Activated T-helper 2 cell treated with anti-CD3 and anti-CD28 coated beads, Interferon-gamma antibody, Interleukin-2, Interleukin-4, amounts not matched to agents 10 μg/mL and 5 μg/mL and 100 μg/mL, durations not matched to agents 14 hours and 24 hours and 36 hours (primary cell): ENCODE measurements at regions of chr5 and their contacts with region 1.

Region 1: DNA sequence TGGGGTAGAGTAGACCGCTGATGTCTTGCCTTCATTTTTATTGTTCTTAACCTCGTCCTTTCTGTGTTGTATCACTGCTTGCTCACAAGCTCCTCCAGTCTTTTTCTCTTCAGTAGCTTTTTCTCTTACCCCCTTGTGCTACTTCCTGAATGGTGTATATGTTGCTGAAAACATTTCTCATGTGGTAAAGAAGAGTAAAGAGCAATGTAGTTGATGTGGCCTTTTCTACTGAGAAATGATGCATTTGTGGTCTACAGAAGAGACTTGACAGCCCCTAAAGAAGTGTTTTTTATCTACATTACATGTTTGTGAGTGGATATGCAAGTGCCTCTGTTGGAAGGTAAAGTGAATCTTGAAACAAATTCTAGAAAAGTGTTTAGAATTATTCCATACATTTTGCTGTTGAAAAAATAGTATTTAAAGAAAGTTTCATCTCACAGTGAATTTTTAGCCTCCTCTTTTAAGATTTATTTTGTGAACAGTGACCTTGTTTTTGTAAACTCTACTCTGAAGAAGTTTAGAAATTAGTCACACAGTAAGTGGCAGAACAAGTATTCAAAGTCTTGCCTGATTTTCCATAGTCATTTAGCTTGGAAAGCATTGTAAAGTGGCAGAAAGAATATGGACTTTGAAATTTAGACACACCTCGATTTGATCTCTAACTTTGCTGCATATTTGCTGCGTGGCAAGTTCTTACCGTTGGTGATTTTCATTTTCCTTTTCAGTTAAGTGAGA is 17.4 kb downstream of the CDC42SE2 start:
- DNase-seq: no peak
- H3K4me3 Mint-ChIP-seq: peak overlapping the region; percentile 82
- H3K27ac Mint-ChIP-seq: peak overlapping the region; percentile 96
- H3K4me1 Mint-ChIP-seq: peaks cover 78% of the 10 kb centered on the region
- H3K27me3 Mint-ChIP-seq: no peaks in the 10 kb centered on the region

Region 2: GRCh38 chr5:131186561-131187256 is 94.6 kb before region 1 on chr5:
- intact Hi-C with region 1: no loop called
- DNase-seq: no peak
- H3K4me3 Mint-ChIP-seq: no peak overlapping the region
- H3K27ac Mint-ChIP-seq: no peak overlapping the region
- H3K4me1 Mint-ChIP-seq: peaks cover 13% of the 10 kb centered on the region
- H3K27me3 Mint-ChIP-seq: no peaks in the 10 kb centered on the region

Region 3: GRCh38 chr5:131263648-131264450 is 17.5 kb before region 1 on chr5 and contains the start of gene CDC42SE2:
- intact Hi-C with region 1: loop called (anchors 1 kb)
- DNase-seq: peak; percentile 85
- H3K4me3 Mint-ChIP-seq: peak within 1 kb of the TSS; percentile 83
- H3K27ac Mint-ChIP-seq: peak within 1 kb of the TSS; percentile 90
- H3K4me1 Mint-ChIP-seq: peaks cover 38% of the 10 kb centered on the region
- H3K27me3 Mint-ChIP-seq: no peaks in the 10 kb centered on the region
- total RNA-seq, gene CDC42SE2: 89.5 and 91.0 TPM in 2 replicates

Region 4: GRCh38 chr5:131357739-131358561 is 76.7 kb after region 1 on chr5:
- intact Hi-C with region 1: loop called (anchors 2 kb)
- DNase-seq: no peak
- H3K4me3 Mint-ChIP-seq: peak overlapping the region; percentile 41
- H3K27ac Mint-ChIP-seq: peak overlapping the region; percentile 90
- H3K4me1 Mint-ChIP-seq: peaks cover 48% of the 10 kb centered on the region
- H3K27me3 Mint-ChIP-seq: no peaks in the 10 kb centered on the region

Region 5: DNA sequence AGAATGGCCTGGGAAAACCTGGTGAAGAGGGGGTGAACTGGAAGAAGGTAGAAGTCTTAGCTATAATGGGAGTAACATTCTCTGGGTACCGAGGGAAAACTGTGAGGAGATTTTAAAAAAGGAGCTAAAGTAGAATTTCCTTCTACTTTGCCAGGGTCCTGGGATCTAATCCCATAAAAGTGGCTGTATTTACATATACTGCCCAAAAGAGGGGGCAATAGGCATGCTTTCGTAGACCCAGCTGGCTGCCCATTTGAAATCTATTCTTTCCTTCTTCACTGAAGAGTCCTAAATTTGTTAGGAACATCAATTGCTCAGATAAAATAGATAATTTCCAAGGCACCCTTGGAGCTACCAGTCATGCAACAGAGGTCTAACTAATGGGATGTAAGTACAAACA is 141.8 kb after region 1 on chr5:
- intact Hi-C with region 1: no loop called
- DNase-seq: no peak
- H3K4me3 Mint-ChIP-seq: no peak overlapping the region
- H3K27ac Mint-ChIP-seq: no peak overlapping the region
- H3K4me1 Mint-ChIP-seq: peaks cover 2% of the 10 kb centered on the region
- H3K27me3 Mint-ChIP-seq: no peaks in the 10 kb centered on the region

Region 6: GRCh38 chr5:132019857-132020555 is 738.7 kb after region 1 on chr5:
- intact Hi-C with region 1: loop called (anchors 10 kb)
- DNase-seq: peak; percentile 82
- H3K4me3 Mint-ChIP-seq: peak overlapping the region; percentile 34
- H3K27ac Mint-ChIP-seq: peak overlapping the region; percentile 92
- H3K4me1 Mint-ChIP-seq: peaks cover 48% of the 10 kb centered on the region
- H3K27me3 Mint-ChIP-seq: peaks cover 24% of the 10 kb centered on the region